Naive thymus-derived CD4-positive, alpha-beta T cell (primary cell): ENCODE measurements at regions of chr12 and their contacts with region 1.

Region 1: GRCh38 chr12:111599459-111600204 is 517 bp upstream of the ATXN2 start:
- DNase-seq: peak; percentile 82 to 94 (median 87)
- ATAC-seq: peak; percentile 89
- H3K4me3 ChIP-seq: peak overlapping the region; percentile 80
- H3K4me3 Mint-ChIP-seq: peak overlapping the region; percentile 74 to 93 (median 86)
- H3K27ac ChIP-seq: peak overlapping the region; percentile 80
- H3K27ac Mint-ChIP-seq: peak overlapping the region; percentile 83 to 93 (median 89)
- H3K4me1 ChIP-seq: peaks cover 3 to 5% of the 10 kb centered on the region in 2 donors
- H3K4me1 Mint-ChIP-seq: peaks cover 22 to 39% (median 26%) of the 10 kb centered on the region in 7 donors
- H3K27me3 ChIP-seq: no peaks in the 10 kb centered on the region
- H3K27me3 Mint-ChIP-seq: no peaks in the 10 kb centered on the region

Region 2: DNA sequence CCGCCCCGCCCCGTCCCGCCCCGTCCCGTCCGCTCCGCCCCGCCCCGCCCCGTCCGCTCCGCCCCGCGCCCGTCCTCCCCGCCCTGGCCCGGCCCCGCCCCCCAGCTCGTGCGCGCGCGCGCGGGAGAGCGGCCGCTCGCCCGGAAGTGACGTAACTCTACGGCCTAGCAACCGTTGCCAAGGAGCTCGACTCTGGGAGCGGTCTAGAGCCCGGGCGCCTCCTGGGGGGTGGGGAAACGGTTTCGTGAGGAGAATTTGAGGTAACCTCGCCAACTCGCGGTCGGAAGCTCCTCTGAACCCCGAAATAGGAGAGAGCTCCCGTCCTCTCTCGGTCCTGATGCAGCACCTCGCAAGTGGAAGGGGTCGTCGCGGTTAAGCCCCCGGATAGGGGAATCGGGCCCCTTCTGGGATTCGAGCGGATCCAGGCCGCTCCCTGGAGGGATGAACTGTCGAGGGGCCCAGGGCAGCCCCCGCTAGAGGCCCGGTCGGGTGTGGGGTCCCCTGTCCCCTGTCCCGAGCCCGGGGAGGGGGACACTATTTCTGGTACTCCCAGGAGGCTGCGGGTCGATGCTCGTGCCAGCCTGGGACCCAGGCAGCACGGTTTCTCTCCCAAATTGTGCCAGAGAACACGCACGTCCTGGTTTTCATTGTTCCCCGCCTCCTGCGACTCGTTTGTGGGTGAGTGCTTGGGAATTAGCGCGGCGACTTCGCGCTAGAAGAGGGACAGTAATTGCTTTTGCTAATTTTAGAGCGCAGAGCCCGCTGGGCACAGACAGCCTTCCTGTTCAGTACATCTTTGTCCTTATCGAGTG is 1475.2 kb before region 1 on chr12 and contains the start of gene IFT81:
- CTCF ChIA-PET with region 1: no interaction called
- POLR2A ChIA-PET with region 1: no interaction called
- intact Hi-C with region 1: loop called in 1 of 2 experiments (anchors 10 kb)
- DNase-seq: peak; percentile 84 to 98 (median 93)
- ATAC-seq: peak; percentile 98
- H3K4me3 ChIP-seq: peak within 1 kb of the TSS; percentile 99
- H3K4me3 Mint-ChIP-seq: peak within 1 kb of the TSS; percentile 83 to 94 (median 92)
- H3K27ac ChIP-seq: peak within 1 kb of the TSS; percentile 84
- H3K27ac Mint-ChIP-seq: peak within 1 kb of the TSS; percentile 56 to 94 (median 90)
- H3K4me1 ChIP-seq: peaks cover 4 to 5% of the 10 kb centered on the region in 2 donors
- H3K4me1 Mint-ChIP-seq: peaks cover 0 to 9% (median 8%) of the 10 kb centered on the region in 7 donors
- H3K27me3 ChIP-seq: no peaks in the 10 kb centered on the region
- H3K27me3 Mint-ChIP-seq: peaks cover 0 to 52% (median 0%) of the 10 kb centered on the region in 5 donors
- total RNA-seq, gene IFT81: 0.66 to 1.3 (median 1.3) TPM

Region 3: DNA sequence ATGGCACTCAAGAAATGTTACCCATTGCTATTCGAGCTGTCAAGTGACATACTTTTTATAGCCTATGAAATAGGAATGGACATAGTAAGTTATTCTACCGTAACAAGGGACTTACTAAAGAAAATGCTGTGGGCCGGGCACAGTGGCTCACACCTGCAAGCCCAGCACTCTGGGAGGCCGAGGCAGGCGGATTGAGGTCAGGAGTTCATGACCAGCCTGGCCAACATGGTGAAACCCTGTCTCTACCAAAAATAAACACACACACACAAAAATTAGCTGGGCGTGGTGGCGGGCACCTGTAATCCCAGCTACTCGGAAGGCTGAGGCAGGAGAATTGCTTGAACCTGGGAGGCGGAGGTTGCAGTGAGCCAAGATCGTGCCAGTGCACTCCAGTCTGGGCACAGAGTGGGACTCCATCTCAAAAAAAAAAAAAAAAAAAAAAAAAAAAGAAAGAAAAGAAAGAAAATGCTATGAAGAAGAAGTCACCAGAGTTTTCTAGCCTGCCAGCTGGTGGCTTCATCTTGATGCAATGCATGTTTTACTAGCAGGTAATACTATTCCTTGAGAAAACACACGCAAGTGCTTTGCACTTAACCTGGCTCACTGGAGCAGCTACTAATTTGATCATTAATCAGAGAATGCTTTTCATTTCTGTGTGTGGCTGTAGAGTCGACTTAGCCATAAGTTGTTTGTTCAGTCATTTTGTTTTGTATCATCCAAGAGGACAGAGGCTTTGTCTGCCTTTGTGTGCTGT is 512.5 kb before region 1 on chr12:
- CTCF ChIA-PET with region 1: no interaction called
- POLR2A ChIA-PET with region 1: no interaction called
- intact Hi-C with region 1: no loop called
- DNase-seq: no peak
- ATAC-seq: no peak
- H3K4me3 ChIP-seq: no peak overlapping the region
- H3K4me3 Mint-ChIP-seq: no peak overlapping the region
- H3K27ac ChIP-seq: no peak overlapping the region
- H3K27ac Mint-ChIP-seq: no peak overlapping the region
- H3K4me1 ChIP-seq: no peaks in the 10 kb centered on the region
- H3K4me1 Mint-ChIP-seq: peaks cover 0 to 11% (median 4%) of the 10 kb centered on the region in 7 donors
- H3K27me3 ChIP-seq: no peaks in the 10 kb centered on the region
- H3K27me3 Mint-ChIP-seq: peaks cover 0 to 7% (median 4%) of the 10 kb centered on the region in 5 donors

Region 4: DNA sequence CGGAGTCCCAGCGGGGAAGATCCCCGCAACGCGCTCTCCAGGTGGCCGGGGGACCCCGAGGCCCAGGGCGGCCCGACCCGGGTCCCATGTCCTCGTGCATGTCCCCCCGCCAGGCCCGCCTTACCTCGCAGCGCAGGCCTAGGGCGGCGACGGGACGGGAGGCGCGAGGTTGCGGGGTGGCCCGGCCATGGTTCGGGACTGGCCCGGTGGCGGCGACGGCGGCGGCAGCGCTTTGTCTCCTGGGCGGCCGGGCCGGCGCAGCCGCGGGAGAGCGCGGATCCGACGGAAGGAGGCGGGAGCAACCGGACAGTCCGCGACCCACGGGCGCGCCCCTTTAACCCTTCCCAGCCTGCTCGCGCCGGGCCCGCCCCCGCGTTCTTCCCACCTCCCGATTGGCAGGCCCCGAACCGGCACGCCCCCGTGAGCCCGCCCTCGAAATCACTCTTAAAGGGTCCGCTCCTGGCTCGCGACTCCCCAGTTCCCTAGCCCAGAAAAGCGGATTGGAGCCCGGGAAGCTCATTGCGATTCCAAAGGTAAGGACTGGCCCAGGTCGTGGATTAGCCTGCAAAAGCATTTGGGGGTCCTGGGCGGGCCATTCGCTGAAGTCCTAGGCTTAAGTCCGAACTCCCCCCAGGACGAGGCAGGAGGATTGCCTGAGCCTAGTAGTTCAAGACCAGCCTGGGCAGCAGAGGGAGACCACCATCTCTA is 230.7 kb before region 1 on chr12 and contains the start of gene PHETA1:
- CTCF ChIA-PET with region 1: no interaction called
- POLR2A ChIA-PET with region 1: no interaction called
- intact Hi-C with region 1: loop called in 1 of 2 experiments (anchors 1 kb)
- DNase-seq: peak; percentile 34 to 88 (median 55)
- ATAC-seq: peak; percentile 96
- H3K4me3 ChIP-seq: peak within 1 kb of the TSS; percentile 81
- H3K4me3 Mint-ChIP-seq: peak within 1 kb of the TSS; percentile 79 to 90 (median 86)
- H3K27ac ChIP-seq: peak within 1 kb of the TSS; percentile 56
- H3K27ac Mint-ChIP-seq: peak within 1 kb of the TSS in 6 of 9 donors; percentile 53 to 80 (median 67)
- H3K4me1 ChIP-seq: peaks cover 14 to 19% of the 10 kb centered on the region in 2 donors
- H3K4me1 Mint-ChIP-seq: peaks cover 15 to 32% (median 24%) of the 10 kb centered on the region in 7 donors
- H3K27me3 ChIP-seq: no peaks in the 10 kb centered on the region
- H3K27me3 Mint-ChIP-seq: peaks cover 0 to 26% (median 0%) of the 10 kb centered on the region in 5 donors
- total RNA-seq, gene PHETA1: 1.2 to 6.8 (median 5.4) TPM

Region 5: GRCh38 chr12:111482462-111482861 is 117.2 kb before region 1 on chr12:
- CTCF ChIA-PET with region 1: no interaction called
- POLR2A ChIA-PET with region 1: no interaction called
- intact Hi-C with region 1: no loop called
- DNase-seq: peak in 2 of 9 donors; percentile 4 to 15
- ATAC-seq: no peak
- H3K4me3 ChIP-seq: no peak overlapping the region
- H3K4me3 Mint-ChIP-seq: no peak overlapping the region
- H3K27ac ChIP-seq: no peak overlapping the region
- H3K27ac Mint-ChIP-seq: peak overlapping the region in 1 of 9 donors; percentile 70
- H3K4me1 ChIP-seq: no peaks in the 10 kb centered on the region
- H3K4me1 Mint-ChIP-seq: no peaks in the 10 kb centered on the region
- H3K27me3 ChIP-seq: no peaks in the 10 kb centered on the region
- H3K27me3 Mint-ChIP-seq: no peaks in the 10 kb centered on the region

Region 6: DNA sequence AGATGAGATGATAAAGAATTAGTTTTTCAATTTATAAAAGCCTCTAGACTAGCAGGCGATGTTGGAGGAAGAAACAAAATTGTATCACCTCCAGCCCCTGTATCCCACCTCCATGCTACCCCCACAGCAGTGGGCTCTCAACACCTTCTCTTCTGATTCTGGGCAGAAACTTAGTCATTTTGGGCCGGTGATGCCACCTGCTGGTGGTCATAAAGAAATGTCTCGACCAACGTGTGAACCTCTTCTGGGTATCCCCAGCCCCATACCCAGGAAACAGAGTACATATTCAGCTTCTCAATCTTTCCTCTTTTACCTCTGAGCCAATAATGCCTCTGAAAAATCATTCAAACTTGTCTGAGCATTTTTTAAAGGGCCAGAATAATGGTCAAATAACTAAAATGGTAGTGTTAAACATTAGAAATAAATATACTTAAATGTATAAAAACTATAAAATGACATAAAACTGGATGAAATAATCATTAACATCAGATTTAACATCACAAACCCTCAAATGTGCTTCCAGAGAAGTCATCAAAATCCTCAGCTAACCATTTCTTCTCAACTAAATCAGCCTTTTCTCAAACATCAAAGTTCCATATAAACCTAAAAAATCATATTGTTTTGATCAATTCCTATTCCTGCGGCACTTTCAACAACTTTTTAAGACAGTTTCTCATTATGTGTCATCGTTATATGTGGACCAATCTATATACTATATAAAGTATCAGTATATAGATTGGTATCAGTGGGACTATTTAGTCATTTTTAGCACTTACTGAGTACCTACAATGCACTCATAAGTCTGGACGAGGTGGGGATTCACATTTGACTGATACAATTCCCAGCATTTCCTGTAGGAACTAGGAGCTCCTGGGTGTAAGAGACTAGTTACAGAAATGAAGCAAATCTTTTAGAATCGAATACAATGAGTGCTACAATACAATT is 69.9 kb before region 1 on chr12:
- CTCF ChIA-PET with region 1: no interaction called
- POLR2A ChIA-PET with region 1: interaction called, 3 read pairs
- intact Hi-C with region 1: loop called in 1 of 2 experiments (anchors 2 kb)
- DNase-seq: peak; percentile 25 to 65 (median 57)
- ATAC-seq: peak; percentile 85
- H3K4me3 ChIP-seq: no peak overlapping the region
- H3K4me3 Mint-ChIP-seq: no peak overlapping the region
- H3K27ac ChIP-seq: no peak overlapping the region
- H3K27ac Mint-ChIP-seq: peak overlapping the region in 2 of 9 donors; percentile 10 to 56
- H3K4me1 ChIP-seq: no peaks in the 10 kb centered on the region
- H3K4me1 Mint-ChIP-seq: peaks cover 0 to 9% (median 6%) of the 10 kb centered on the region in 7 donors
- H3K27me3 ChIP-seq: no peaks in the 10 kb centered on the region
- H3K27me3 Mint-ChIP-seq: no peaks in the 10 kb centered on the region

Region 7: GRCh38 chr12:111643427-111643826 is 43.8 kb after region 1 on chr12:
- CTCF ChIA-PET with region 1: interaction called, 4 read pairs
- POLR2A ChIA-PET with region 1: no interaction called
- intact Hi-C with region 1: loop called in 1 of 2 experiments (anchors 10 kb)
- DNase-seq: no peak
- ATAC-seq: no peak
- H3K4me3 ChIP-seq: no peak overlapping the region
- H3K4me3 Mint-ChIP-seq: no peak overlapping the region
- H3K27ac ChIP-seq: no peak overlapping the region
- H3K27ac Mint-ChIP-seq: no peak overlapping the region
- H3K4me1 ChIP-seq: no peaks in the 10 kb centered on the region
- H3K4me1 Mint-ChIP-seq: peaks cover 0 to 3% (median 0%) of the 10 kb centered on the region in 7 donors
- H3K27me3 ChIP-seq: no peaks in the 10 kb centered on the region
- H3K27me3 Mint-ChIP-seq: no peaks in the 10 kb centered on the region

Region 8: GRCh38 chr12:111841750-111842555 is 242.3 kb after region 1 on chr12 and contains the start of gene MAPKAPK5:
- CTCF ChIA-PET with region 1: no interaction called
- POLR2A ChIA-PET with region 1: no interaction called
- intact Hi-C with region 1: loop called in 1 of 2 experiments (anchors 1 kb)
- DNase-seq: peak; percentile 95 to 99 (median 98)
- ATAC-seq: peak; percentile 93
- H3K4me3 ChIP-seq: peak within 1 kb of the TSS; percentile 99
- H3K4me3 Mint-ChIP-seq: peak within 1 kb of the TSS; percentile 90 to 99 (median 98)
- H3K27ac ChIP-seq: peak within 1 kb of the TSS; percentile 89
- H3K27ac Mint-ChIP-seq: peak within 1 kb of the TSS; percentile 91 to 100 (median 98)
- H3K4me1 ChIP-seq: peaks cover 28 to 32% of the 10 kb centered on the region in 2 donors
- H3K4me1 Mint-ChIP-seq: peaks cover 40 to 82% (median 69%) of the 10 kb centered on the region in 7 donors
- H3K27me3 ChIP-seq: no peaks in the 10 kb centered on the region
- H3K27me3 Mint-ChIP-seq: peaks cover 0 to 2% (median 0%) of the 10 kb centered on the region in 5 donors
- total RNA-seq, gene MAPKAPK5: 46.1 to 72.1 (median 60.0) TPM

Region 9: GRCh38 chr12:112409064-112409905 is 809.7 kb after region 1 on chr12 and contains the start of gene RPL6:
- CTCF ChIA-PET with region 1: no interaction called
- POLR2A ChIA-PET with region 1: no interaction called
- intact Hi-C with region 1: loop called in 1 of 2 experiments (anchors 2 kb)
- DNase-seq: peak; percentile 61 to 88 (median 84)
- ATAC-seq: peak; percentile 94
- H3K4me3 ChIP-seq: peak within 1 kb of the TSS; percentile 93
- H3K4me3 Mint-ChIP-seq: peak within 1 kb of the TSS; percentile 97 to 100 (median 100)
- H3K27ac ChIP-seq: peak within 1 kb of the TSS; percentile 84
- H3K27ac Mint-ChIP-seq: peak within 1 kb of the TSS; percentile 99 to 100 (median 100)
- H3K4me1 ChIP-seq: peaks cover 18 to 20% of the 10 kb centered on the region in 2 donors
- H3K4me1 Mint-ChIP-seq: peaks cover 17 to 48% (median 36%) of the 10 kb centered on the region in 7 donors
- H3K27me3 ChIP-seq: no peaks in the 10 kb centered on the region
- H3K27me3 Mint-ChIP-seq: no peaks in the 10 kb centered on the region
- total RNA-seq, gene RPL6: 1,134 to 1,668 (median 1,601) TPM